Heart right ventricle (tissue), 16 donors: ENCODE measurements at regions of chr5 and their contacts with region 1.

Region 1: GRCh38 chr5:38473008-38473407 is 83.4 kb downstream of the LIFR start:
- DNase-seq: peak in 1 of 2 donors; percentile 44
- ATAC-seq: peak in 5 of 8 donors; percentile 25 to 60 (median 30)
- H3K4me3 ChIP-seq: no peak overlapping the region
- H3K27ac ChIP-seq: no peak overlapping the region
- H3K4me1 ChIP-seq: peaks cover 9 to 37% (median 26%) of the 10 kb centered on the region in 9 donors
- H3K27me3 ChIP-seq: peaks cover 0 to 59% (median 0%) of the 10 kb centered on the region in 7 donors
- CTCF ChIP-seq: no peak

Region 2: GRCh38 chr5:38148021-38148625 is 324.9 kb before region 1 on chr5:
- intact Hi-C with region 1: no loop called
- DNase-seq: no peak
- ATAC-seq: no peak
- H3K4me3 ChIP-seq: no peak overlapping the region
- H3K27ac ChIP-seq: no peak overlapping the region
- H3K4me1 ChIP-seq: no peaks in the 10 kb centered on the region
- H3K27me3 ChIP-seq: peaks cover 0 to 5% (median 0%) of the 10 kb centered on the region in 7 donors
- CTCF ChIP-seq: no peak

Region 3: DNA sequence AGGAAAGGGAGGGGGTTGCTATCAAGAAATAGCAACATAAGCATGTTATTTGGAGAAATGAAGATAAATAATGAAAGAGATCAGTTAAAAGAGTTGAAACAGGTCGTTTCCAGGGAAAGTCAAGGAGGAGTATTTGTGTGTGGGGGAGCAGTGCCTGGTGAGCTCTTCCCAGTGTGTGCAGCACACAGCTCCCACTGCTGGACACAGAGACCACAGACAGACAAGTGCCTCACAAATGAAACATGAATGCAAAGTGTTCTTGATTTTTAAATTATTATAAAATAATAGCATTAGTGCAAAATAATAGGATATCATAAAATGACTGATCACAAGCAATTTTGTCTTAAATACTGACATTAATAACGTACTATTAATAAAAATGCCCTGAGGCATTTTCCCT is 42.6 kb after region 1 on chr5:
- intact Hi-C with region 1: loop called in 1 of 10 experiments (anchors 5 kb)
- DNase-seq: no peak
- ATAC-seq: peak in 1 of 8 donors; percentile 56
- H3K4me3 ChIP-seq: no peak overlapping the region
- H3K27ac ChIP-seq: no peak overlapping the region
- H3K4me1 ChIP-seq: no peaks in the 10 kb centered on the region
- H3K27me3 ChIP-seq: peaks cover 0 to 3% (median 0%) of the 10 kb centered on the region in 7 donors
- CTCF ChIP-seq: peak in 8 of 9 donors; percentile 27 to 60 (median 36)

Region 4: GRCh38 chr5:38582293-38582974 is 109.4 kb after region 1 on chr5:
- intact Hi-C with region 1: no loop called
- DNase-seq: no peak
- ATAC-seq: no peak
- H3K4me3 ChIP-seq: peak overlapping the region in 1 of 10 donors; percentile 5
- H3K27ac ChIP-seq: no peak overlapping the region
- H3K4me1 ChIP-seq: peaks cover 0 to 8% (median 0%) of the 10 kb centered on the region in 9 donors
- H3K27me3 ChIP-seq: no peaks in the 10 kb centered on the region
- CTCF ChIP-seq: no peak